Ascending aorta (tissue), 2 donors: ENCODE measurements at regions of chr4 and their contacts with region 1.

Region 1: GRCh38 chr4:24770032-24770584 is 25.3 kb upstream of the SOD3 start:
- DNase-seq: no peak
- H3K4me3 ChIP-seq: no peak overlapping the region
- H3K27ac ChIP-seq: no peak overlapping the region
- H3K4me1 ChIP-seq: no peaks in the 10 kb centered on the region
- H3K27me3 ChIP-seq: no peaks in the 10 kb centered on the region
- CTCF ChIP-seq: no peak

Region 2: GRCh38 chr4:26015133-26015651 is 1245.1 kb after region 1 on chr4:
- intact Hi-C with region 1: loop called (anchors 10 kb)
- DNase-seq: peak; percentile 63 to 96
- H3K4me3 ChIP-seq: no peak overlapping the region
- H3K27ac ChIP-seq: peak overlapping the region; percentile 21 to 46
- H3K4me1 ChIP-seq: peaks cover 4 to 25% of the 10 kb centered on the region in 2 donors
- H3K27me3 ChIP-seq: no peaks in the 10 kb centered on the region
- CTCF ChIP-seq: no peak